ENCODE measurements at regions of chr7 and their contacts with region 1.

Region 1: GRCh38 chr7:43260980-43261878 is 148.8 kb downstream of the HECW1 start:
- DNase-seq: peak; percentile 86
- H3K4me3 Mint-ChIP-seq: no peak overlapping the region
- H3K27ac Mint-ChIP-seq: no peak overlapping the region
- H3K4me1 Mint-ChIP-seq: no peaks in the 10 kb centered on the region
- H3K27me3 Mint-ChIP-seq: no peaks in the 10 kb centered on the region
- CTCF ChIP-seq: peak; percentile 90

Region 2: GRCh38 chr7:42931834-42932651 is 329.2 kb before region 1 on chr7 and contains the starts of genes MRPL32 and PSMA2:
- CTCF ChIA-PET with region 1: interaction called, 22 read pairs
- POLR2A ChIA-PET with region 1: interaction called, 7 read pairs
- intact Hi-C with region 1: no loop called
- DNase-seq: peak; percentile 98
- H3K4me3 Mint-ChIP-seq: peak within 1 kb of the TSS; percentile 100
- H3K27ac Mint-ChIP-seq: peak within 1 kb of the TSS; percentile 99
- H3K4me1 Mint-ChIP-seq: peaks cover 26% of the 10 kb centered on the region
- H3K27me3 Mint-ChIP-seq: no peaks in the 10 kb centered on the region
- CTCF ChIP-seq: no peak
- total RNA-seq, gene MRPL32: 69.8 and 82.0 TPM in 2 replicates
- total RNA-seq, gene PSMA2: 65.5 and 73.8 TPM in 2 replicates

Region 3: DNA sequence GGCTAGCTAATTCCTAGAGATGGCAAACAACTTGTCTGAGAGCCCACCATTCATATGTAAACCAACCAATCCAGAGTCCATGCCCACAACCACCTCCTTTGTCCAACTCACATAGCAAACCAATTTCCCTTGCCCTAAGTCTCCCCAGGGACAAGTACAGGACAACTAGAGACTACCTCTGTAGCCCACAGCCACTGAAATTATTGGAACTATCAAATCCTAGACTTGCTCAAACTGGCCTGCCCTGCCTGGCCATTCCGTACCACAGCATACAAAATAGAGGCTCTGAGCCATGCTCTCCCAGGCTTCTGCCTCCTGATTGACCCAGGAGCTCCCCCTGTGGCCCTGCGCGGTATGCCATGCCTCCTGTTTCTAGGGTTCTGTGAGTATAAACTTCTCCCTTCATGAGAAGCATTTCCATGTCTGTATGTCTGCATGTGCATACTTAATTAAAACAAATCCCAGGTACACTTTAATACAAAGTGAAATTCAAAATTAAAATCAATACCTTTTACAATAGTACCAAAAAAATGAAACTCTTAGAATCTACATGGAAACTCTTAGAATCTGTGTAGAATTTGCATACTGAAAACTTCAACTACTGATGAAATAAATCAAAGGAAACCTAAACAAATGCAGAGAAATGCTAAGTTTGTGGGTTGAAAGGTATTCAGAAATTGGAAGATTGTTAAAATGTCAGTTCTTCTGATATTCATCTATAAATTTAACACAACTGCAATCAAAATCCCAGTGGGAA is 152.8 kb before region 1 on chr7:
- CTCF ChIA-PET with region 1: interaction called, 14 read pairs
- POLR2A ChIA-PET with region 1: no interaction called
- intact Hi-C with region 1: no loop called
- DNase-seq: peak; percentile 78
- H3K4me3 Mint-ChIP-seq: no peak overlapping the region
- H3K27ac Mint-ChIP-seq: no peak overlapping the region
- H3K4me1 Mint-ChIP-seq: no peaks in the 10 kb centered on the region
- H3K27me3 Mint-ChIP-seq: peaks cover 30% of the 10 kb centered on the region
- CTCF ChIP-seq: peak; percentile 91

Region 4: GRCh38 chr7:43175570-43176200 is 85.5 kb before region 1 on chr7:
- CTCF ChIA-PET with region 1: interaction called, 3 read pairs
- POLR2A ChIA-PET with region 1: interaction called, 3 read pairs
- intact Hi-C with region 1: loop called (anchors 5 kb)
- DNase-seq: no peak
- H3K4me3 Mint-ChIP-seq: no peak overlapping the region
- H3K27ac Mint-ChIP-seq: no peak overlapping the region
- H3K4me1 Mint-ChIP-seq: no peaks in the 10 kb centered on the region
- H3K27me3 Mint-ChIP-seq: no peaks in the 10 kb centered on the region
- CTCF ChIP-seq: no peak

Region 5: GRCh38 chr7:43439631-43440401 is 178.6 kb after region 1 on chr7:
- CTCF ChIA-PET with region 1: interaction called, 13 read pairs
- POLR2A ChIA-PET with region 1: no interaction called
- intact Hi-C with region 1: loop called (anchors 1 kb)
- DNase-seq: peak; percentile 64
- H3K4me3 Mint-ChIP-seq: no peak overlapping the region
- H3K27ac Mint-ChIP-seq: no peak overlapping the region
- H3K4me1 Mint-ChIP-seq: no peaks in the 10 kb centered on the region
- H3K27me3 Mint-ChIP-seq: no peaks in the 10 kb centered on the region
- CTCF ChIP-seq: peak; percentile 90

Region 6: GRCh38 chr7:43721193-43721806 is 460.1 kb after region 1 on chr7:
- CTCF ChIA-PET with region 1: no interaction called
- POLR2A ChIA-PET with region 1: no interaction called
- intact Hi-C with region 1: loop called (anchors 1 kb)
- DNase-seq: peak; percentile 70
- H3K4me3 Mint-ChIP-seq: no peak overlapping the region
- H3K27ac Mint-ChIP-seq: no peak overlapping the region
- H3K4me1 Mint-ChIP-seq: peaks cover 15% of the 10 kb centered on the region
- H3K27me3 Mint-ChIP-seq: no peaks in the 10 kb centered on the region
- CTCF ChIP-seq: peak; percentile 49

Region 7: GRCh38 chr7:44486693-44487092 is 1225.5 kb after region 1 on chr7:
- CTCF ChIA-PET with region 1: no interaction called
- POLR2A ChIA-PET with region 1: no interaction called
- intact Hi-C with region 1: no loop called
- DNase-seq: peak; percentile 49
- H3K4me3 Mint-ChIP-seq: peak overlapping the region; percentile 52
- H3K27ac Mint-ChIP-seq: peak overlapping the region; percentile 17
- H3K4me1 Mint-ChIP-seq: peaks cover 49% of the 10 kb centered on the region
- H3K27me3 Mint-ChIP-seq: no peaks in the 10 kb centered on the region
- CTCF ChIP-seq: no peak

Measured in MCF 10A (cell line).